Activated naive CD4-positive, alpha-beta T cell treated with anti-CD3 and anti-CD28 coated beads for 36 hours (primary cell): ENCODE measurements at regions of chr2 and their contacts with region 1.

Region 1: DNA sequence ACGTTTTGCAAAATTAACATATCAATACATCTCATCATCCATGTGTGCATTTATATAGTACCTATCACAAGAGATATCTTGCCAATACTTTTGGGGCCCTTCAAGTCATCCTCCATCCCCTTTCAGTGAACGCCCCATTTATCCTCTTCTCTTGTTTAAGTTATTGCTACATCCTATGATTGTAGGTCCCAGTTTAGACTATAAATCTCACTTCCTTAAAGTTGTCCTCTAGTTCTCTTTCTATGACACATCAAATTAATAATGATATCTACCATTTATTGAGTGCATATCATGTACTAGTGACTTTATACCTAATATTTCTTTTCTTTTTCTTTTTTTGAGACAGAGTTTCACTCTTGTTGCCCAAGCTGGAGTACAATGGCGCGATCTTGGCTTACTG is 28.8 kb upstream of the FBXO11 start:
- DNase-seq: no peak
- H3K4me3 Mint-ChIP-seq: no peak overlapping the region
- H3K27ac Mint-ChIP-seq: no peak overlapping the region
- H3K4me1 Mint-ChIP-seq: no peaks in the 10 kb centered on the region
- H3K27me3 Mint-ChIP-seq: peaks cover 6% of the 10 kb centered on the region

Region 2: GRCh38 chr2:47893771-47894170 is 41.3 kb before region 1 on chr2:
- CTCF ChIA-PET with region 1: no interaction called
- intact Hi-C with region 1: loop called (anchors 1 kb)
- DNase-seq: no peak
- H3K4me3 Mint-ChIP-seq: no peak overlapping the region
- H3K27ac Mint-ChIP-seq: no peak overlapping the region
- H3K4me1 Mint-ChIP-seq: peaks cover 82% of the 10 kb centered on the region
- H3K27me3 Mint-ChIP-seq: no peaks in the 10 kb centered on the region

Region 3: GRCh38 chr2:48209214-48209885 is 274.3 kb after region 1 on chr2:
- CTCF ChIA-PET with region 1: no interaction called
- intact Hi-C with region 1: no loop called
- DNase-seq: no peak
- H3K4me3 Mint-ChIP-seq: no peak overlapping the region
- H3K27ac Mint-ChIP-seq: no peak overlapping the region
- H3K4me1 Mint-ChIP-seq: peaks cover 6% of the 10 kb centered on the region
- H3K27me3 Mint-ChIP-seq: no peaks in the 10 kb centered on the region